T-cell (primary cell): ENCODE measurements at regions of chrX and their contacts with region 1.

Region 1: DNA sequence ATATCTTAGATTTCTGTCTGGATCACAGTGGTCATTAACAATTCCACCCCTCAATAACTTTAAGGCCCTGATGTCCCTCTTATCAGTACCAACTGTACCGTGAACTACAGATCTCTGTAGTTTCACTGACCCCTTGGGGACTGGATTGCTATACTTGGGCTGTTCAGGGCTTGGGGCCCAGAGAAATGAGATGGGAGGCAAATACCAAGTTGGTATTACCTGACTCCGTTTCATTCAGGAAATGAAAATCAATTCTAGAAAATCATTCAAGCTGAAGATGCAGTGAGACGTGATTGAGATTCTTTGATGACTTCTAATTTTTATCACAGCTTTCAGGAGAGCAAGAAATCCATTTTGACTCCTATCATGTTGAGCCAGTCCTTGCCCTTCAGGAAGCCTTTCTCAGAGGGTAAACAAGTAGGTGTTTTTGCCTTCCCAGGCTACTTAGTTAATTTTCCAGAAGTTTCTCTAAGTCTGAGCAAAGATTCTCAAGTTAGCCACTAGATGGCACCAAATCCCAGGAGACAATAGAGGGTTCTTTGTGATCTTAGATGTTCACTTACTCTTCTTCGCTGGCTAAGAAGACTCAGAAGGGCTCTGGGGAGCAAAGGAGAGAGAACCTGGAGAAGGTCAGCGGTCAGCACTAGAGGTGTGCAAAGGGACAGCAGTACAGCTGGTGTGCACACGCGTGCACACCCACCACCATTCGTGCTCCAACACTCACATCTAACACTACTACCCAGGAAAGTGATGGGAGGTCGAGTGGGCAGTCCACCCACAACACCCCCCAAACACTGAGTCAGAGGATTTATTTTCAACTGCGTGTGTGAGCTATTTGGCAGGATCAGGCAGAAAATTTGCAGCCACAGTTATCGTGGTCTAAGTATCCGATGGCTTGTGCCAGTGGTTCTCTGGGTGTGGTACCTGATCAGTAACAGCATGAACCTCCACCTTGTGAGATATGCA is 7.4 kb downstream of the HNRNPH2 start:
- DNase-seq: peak in 17 of 35 experiments; percentile 4 to 84 (median 18)
- ATAC-seq: peak; percentile 65 to 76 (median 72)
- H3K4me3 ChIP-seq: no peak overlapping the region
- H3K4me3 Mint-ChIP-seq: peak overlapping the region in 2 of 3 donors; percentile 12 to 25
- H3K27ac ChIP-seq: peak overlapping the region; percentile 66
- H3K27ac Mint-ChIP-seq: peak overlapping the region; percentile 85 to 87
- H3K4me1 ChIP-seq: peaks cover 8 to 25% of the 10 kb centered on the region in 2 experiments
- H3K4me1 Mint-ChIP-seq: peaks cover 44 to 63% (median 46%) of the 10 kb centered on the region in 3 donors
- H3K27me3 ChIP-seq: peaks cover 0 to 2% of the 10 kb centered on the region in 2 experiments
- H3K27me3 Mint-ChIP-seq: peaks cover 0 to 23% of the 10 kb centered on the region in 2 donors

Region 2: GRCh38 chrX:101368256-101368655 is 47.2 kb before region 1 on chrX:
- CTCF ChIA-PET with region 1: interaction called in 1 of 2 experiments, 10 read pairs
- POLR2A ChIA-PET with region 1: interaction called in 1 of 2 experiments, 8 read pairs
- DNase-seq: no peak
- ATAC-seq: no peak
- H3K4me3 ChIP-seq: no peak overlapping the region
- H3K4me3 Mint-ChIP-seq: no peak overlapping the region
- H3K27ac ChIP-seq: no peak overlapping the region
- H3K27ac Mint-ChIP-seq: no peak overlapping the region
- H3K4me1 ChIP-seq: no peaks in the 10 kb centered on the region
- H3K4me1 Mint-ChIP-seq: peaks cover 0 to 4% (median 0%) of the 10 kb centered on the region in 3 donors
- H3K27me3 ChIP-seq: no peaks in the 10 kb centered on the region
- H3K27me3 Mint-ChIP-seq: peaks cover 0 to 18% of the 10 kb centered on the region in 2 donors

Region 3: GRCh38 chrX:101385795-101386541 is 29.5 kb before region 1 on chrX and contains the start of gene BTK:
- CTCF ChIA-PET with region 1: interaction called, 3 read pairs
- POLR2A ChIA-PET with region 1: interaction called in 1 of 2 experiments, 15 read pairs
- DNase-seq: no peak
- ATAC-seq: no peak
- H3K4me3 ChIP-seq: no peak within 1 kb of the TSS
- H3K4me3 Mint-ChIP-seq: peak within 1 kb of the TSS in 1 of 3 donors; percentile 76
- H3K27ac ChIP-seq: no peak within 1 kb of the TSS
- H3K27ac Mint-ChIP-seq: peak within 1 kb of the TSS in 1 of 2 donors; percentile 43
- H3K4me1 ChIP-seq: peaks cover 0 to 5% of the 10 kb centered on the region in 2 experiments
- H3K4me1 Mint-ChIP-seq: peaks cover 1 to 10% (median 8%) of the 10 kb centered on the region in 3 donors
- H3K27me3 ChIP-seq: no peaks in the 10 kb centered on the region
- H3K27me3 Mint-ChIP-seq: peaks cover 0 to 4% of the 10 kb centered on the region in 2 donors
- total RNA-seq, gene BTK: 1.6 to 9.5 (median 4.1) TPM

Region 4: DNA sequence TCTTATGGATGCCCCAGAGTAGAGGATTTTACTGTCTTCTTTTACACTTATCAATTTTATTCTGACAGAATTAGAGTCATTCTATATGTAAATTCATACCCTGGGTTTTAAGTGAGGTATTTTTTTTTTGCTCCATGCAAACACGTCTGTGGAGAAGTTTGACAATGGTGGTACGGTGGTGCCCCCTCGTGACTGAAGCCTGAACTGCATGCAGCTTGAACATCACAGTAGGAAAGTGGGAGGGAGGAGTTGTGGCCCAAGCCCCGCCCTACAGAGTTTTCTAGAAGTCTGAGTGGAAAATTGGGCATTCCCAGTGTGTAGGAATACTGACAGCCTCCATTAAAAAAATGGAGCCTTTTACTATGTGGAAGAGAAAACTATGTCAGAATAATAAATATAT is 1448.3 kb after region 1 on chrX:
- CTCF ChIA-PET with region 1: no interaction called
- POLR2A ChIA-PET with region 1: no interaction called
- DNase-seq: peak; percentile 41 to 84 (median 72)
- ATAC-seq: peak; percentile 55 to 84 (median 76)
- H3K4me3 ChIP-seq: no peak overlapping the region
- H3K4me3 Mint-ChIP-seq: no peak overlapping the region
- H3K27ac ChIP-seq: no peak overlapping the region
- H3K27ac Mint-ChIP-seq: no peak overlapping the region
- H3K4me1 ChIP-seq: no peaks in the 10 kb centered on the region
- H3K4me1 Mint-ChIP-seq: no peaks in the 10 kb centered on the region
- H3K27me3 ChIP-seq: no peaks in the 10 kb centered on the region
- H3K27me3 Mint-ChIP-seq: no peaks in the 10 kb centered on the region